ENCODE measurements at regions of chr1 and their contacts with region 1.

Region 1: DNA sequence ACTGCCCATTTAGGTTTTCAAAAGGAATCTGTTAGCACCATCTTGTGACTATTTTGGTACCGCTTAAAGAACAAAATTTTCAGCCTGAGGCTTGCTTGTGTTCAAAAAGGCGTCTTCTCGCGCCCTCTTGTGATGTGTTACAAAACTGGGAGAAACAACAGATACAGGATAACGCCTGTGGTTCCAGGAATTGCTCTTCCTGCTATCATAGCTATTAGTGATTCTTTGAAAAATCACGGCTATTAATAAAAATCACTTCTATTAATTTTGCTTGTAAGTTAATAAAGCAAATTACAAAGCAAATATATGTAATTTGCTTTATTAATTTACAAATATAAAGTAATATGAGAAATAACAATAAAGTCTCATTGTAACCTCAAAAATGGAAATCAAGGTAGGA is 82.2 kb upstream of the ABCD3 start:
- DNase-seq: peak; percentile 81 to 86 (median 85)
- H3K4me3 ChIP-seq: no peak overlapping the region
- H3K27ac ChIP-seq: no peak overlapping the region
- H3K4me1 ChIP-seq: peaks cover 5 to 20% (median 12%) of the 10 kb centered on the region in 4 experiments
- H3K27me3 ChIP-seq: peaks cover 0 to 3% (median 0%) of the 10 kb centered on the region in 5 experiments

Region 2: GRCh38 chr1:94045465-94046056 is 290.4 kb before region 1 on chr1:
- CTCF ChIA-PET with region 1: interaction called, 616 read pairs
- POLR2A ChIA-PET with region 1: no interaction called
- DNase-seq: peak; percentile 58 to 70 (median 68)
- H3K4me3 ChIP-seq: peak overlapping the region in 6 of 7 experiments; percentile 16 to 73 (median 48)
- H3K27ac ChIP-seq: no peak overlapping the region
- H3K4me1 ChIP-seq: peaks cover 0 to 16% (median 8%) of the 10 kb centered on the region in 4 experiments
- H3K27me3 ChIP-seq: peaks cover 0 to 5% (median 0%) of the 10 kb centered on the region in 5 experiments

Region 3: GRCh38 chr1:94068999-94069918 is 266.7 kb before region 1 on chr1:
- CTCF ChIA-PET with region 1: interaction called, 214 read pairs
- POLR2A ChIA-PET with region 1: no interaction called
- DNase-seq: peak in 2 of 3 donors; percentile 45 to 63
- H3K4me3 ChIP-seq: no peak overlapping the region
- H3K27ac ChIP-seq: no peak overlapping the region
- H3K4me1 ChIP-seq: peaks cover 18 to 35% (median 27%) of the 10 kb centered on the region in 4 experiments
- H3K27me3 ChIP-seq: peaks cover 0 to 1% (median 0%) of the 10 kb centered on the region in 5 experiments

Region 4: GRCh38 chr1:94237291-94238226 is 98.4 kb before region 1 on chr1 and contains the start of gene ARHGAP29:
- CTCF ChIA-PET with region 1: interaction called, 24 read pairs
- POLR2A ChIA-PET with region 1: no interaction called
- DNase-seq: peak; percentile 54 to 76 (median 66)
- H3K4me3 ChIP-seq: peak within 1 kb of the TSS; percentile 4 to 72 (median 57)
- H3K27ac ChIP-seq: no peak within 1 kb of the TSS
- H3K4me1 ChIP-seq: peaks cover 9 to 20% (median 14%) of the 10 kb centered on the region in 4 experiments
- H3K27me3 ChIP-seq: peaks cover 13 to 77% (median 39%) of the 10 kb centered on the region in 5 experiments

Region 5: GRCh38 chr1:94247138-94248094 is 88.5 kb before region 1 on chr1:
- CTCF ChIA-PET with region 1: interaction called, 12 read pairs
- POLR2A ChIA-PET with region 1: no interaction called
- DNase-seq: peak in 2 of 3 donors; percentile 48 to 62
- H3K4me3 ChIP-seq: peak overlapping the region; percentile 40 to 76 (median 58)
- H3K27ac ChIP-seq: no peak overlapping the region
- H3K4me1 ChIP-seq: peaks cover 0 to 16% (median 12%) of the 10 kb centered on the region in 4 experiments
- H3K27me3 ChIP-seq: peaks cover 13 to 64% (median 28%) of the 10 kb centered on the region in 5 experiments

Region 6: DNA sequence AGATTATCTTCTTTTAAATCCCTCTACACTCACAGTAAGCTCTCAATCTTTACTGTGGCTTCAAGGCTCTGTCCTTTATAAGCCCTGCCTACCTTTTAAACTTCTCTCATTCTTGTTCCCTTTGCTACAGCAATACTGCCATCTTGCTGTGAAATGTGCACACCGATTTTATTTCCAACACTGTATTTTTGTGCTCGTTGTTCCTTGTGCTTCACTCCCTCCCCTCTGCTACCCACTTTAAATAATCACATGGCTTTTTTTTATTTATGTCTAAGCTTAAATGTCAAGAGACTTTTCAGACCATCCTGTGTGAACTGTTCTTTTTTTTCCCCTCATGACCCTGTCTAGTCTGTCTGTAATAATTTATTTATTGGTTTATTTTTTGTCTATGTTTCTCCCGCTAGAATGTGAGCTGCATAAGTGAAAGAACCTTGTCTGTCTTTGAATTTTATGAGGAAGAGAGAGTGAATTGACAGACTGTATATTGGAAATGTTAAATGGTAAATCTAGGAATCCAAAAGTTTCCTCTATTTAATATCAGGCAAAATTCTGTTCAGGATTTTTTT is 127.9 kb after region 1 on chr1:
- CTCF ChIA-PET with region 1: interaction called, 11 read pairs
- POLR2A ChIA-PET with region 1: no interaction called
- DNase-seq: peak; percentile 62 to 82 (median 78)
- H3K4me3 ChIP-seq: no peak overlapping the region
- H3K27ac ChIP-seq: no peak overlapping the region
- H3K4me1 ChIP-seq: peaks cover 0 to 13% (median under 1%) of the 10 kb centered on the region in 4 experiments
- H3K27me3 ChIP-seq: no peaks in the 10 kb centered on the region